ENCODE measurements at regions of chr2 and their contacts with region 1.

Region 1: DNA sequence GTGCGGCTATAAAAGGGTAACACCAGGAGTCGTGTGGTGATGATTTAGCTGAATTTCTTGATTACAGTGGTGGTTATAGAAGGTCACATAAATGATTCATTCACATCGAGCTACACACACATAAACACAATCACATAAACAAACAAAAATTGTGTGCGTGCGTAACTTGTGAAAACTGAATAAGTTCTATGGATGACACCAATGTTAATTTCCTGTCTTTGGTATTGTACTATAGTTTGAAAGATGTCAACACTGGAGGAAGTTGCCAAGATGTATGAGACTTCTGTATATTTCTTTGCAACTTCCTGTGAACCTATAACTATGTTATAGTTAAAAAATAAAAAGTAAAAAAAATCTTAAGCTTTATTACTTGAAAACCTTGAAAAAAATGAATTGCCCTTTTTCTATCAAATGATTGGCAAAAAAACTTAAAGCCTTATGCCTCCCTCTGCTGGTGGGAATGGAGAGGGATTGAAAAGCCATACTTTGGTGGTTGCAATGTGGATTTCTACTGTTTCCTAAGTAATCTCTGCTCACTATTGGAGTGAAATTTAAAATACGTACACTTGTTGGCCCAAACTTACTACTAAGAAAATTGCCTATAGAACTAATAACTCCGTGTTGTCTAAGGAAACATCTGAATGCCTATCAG is 227.7 kb downstream of the RPIA start:
- DNase-seq: peak; percentile 29
- H3K4me3 ChIP-seq: no peak overlapping the region
- H3K27ac ChIP-seq: no peak overlapping the region
- H3K4me1 ChIP-seq: no peaks in the 10 kb centered on the region
- H3K27me3 ChIP-seq: peaks cover 34% of the 10 kb centered on the region
- CTCF ChIP-seq: peak; percentile 69

Region 2: DNA sequence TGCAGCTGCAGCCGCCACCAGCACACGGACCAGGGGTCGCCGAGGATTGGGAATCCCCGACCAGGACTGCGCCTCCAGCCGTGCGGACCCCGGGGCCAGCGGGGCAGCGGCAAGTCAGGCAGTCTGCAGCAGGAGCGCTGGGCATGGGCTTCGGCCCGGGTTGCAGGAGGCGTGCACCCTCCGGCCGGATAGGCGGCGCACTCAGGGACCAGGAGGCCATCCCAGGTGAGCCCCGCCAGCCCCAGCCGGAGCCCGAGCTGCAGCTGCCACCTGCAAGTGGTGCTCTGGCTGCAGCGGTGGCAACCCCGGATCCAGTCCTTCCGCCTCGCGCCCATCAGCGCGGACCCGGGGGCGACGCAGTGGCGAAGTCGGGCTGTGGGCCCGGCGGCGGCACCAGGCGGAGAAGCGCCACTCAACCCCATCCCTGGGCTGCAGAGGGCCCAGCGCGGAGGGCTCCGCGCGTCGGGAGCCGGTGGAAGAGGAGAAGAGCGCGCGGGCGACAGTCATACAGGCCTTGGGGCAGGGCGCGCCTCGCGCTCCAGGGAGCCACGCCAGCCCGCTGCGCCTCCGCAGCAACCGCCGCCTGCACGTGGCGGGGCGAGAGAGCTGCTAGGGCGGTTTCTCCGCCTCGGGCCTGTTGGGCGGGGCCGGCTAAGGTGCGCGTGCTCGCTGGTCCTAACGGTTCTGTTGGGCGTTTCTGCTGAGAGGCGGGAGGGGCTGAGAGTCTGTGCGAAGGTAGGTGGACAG is 153.9 kb before region 1 on chr2:
- CTCF ChIA-PET with region 1: no interaction called
- POLR2A ChIA-PET with region 1: no interaction called
- intact Hi-C with region 1: no loop called
- DNase-seq: peak; percentile 67
- H3K4me3 ChIP-seq: peak overlapping the region; percentile 37
- H3K27ac ChIP-seq: no peak overlapping the region
- H3K4me1 ChIP-seq: no peaks in the 10 kb centered on the region
- H3K27me3 ChIP-seq: peaks cover 17% of the 10 kb centered on the region
- CTCF ChIP-seq: no peak

Region 3: DNA sequence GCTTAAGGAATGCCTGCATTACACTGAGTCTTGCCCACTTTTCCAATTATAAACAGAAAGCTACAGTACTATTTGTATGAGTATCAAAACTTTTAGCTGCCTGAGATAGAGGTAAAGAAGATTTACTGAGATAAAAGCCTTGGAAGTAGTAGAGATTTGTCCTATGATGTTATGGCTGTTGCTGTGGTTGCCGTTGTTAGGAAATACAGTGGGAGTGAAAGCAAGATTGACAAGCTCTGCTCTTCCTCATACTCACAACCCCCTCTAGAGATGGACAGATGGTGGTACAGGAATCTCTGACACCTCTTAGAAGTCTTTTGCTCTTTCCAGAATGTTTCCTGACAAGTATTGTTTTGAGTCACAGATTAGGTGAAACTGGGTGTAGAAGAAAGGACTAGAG is 14.8 kb after region 1 on chr2:
- CTCF ChIA-PET with region 1: no interaction called
- POLR2A ChIA-PET with region 1: no interaction called
- intact Hi-C with region 1: loop called (anchors 1 kb)
- DNase-seq: peak; percentile 22
- H3K4me3 ChIP-seq: no peak overlapping the region
- H3K27ac ChIP-seq: no peak overlapping the region
- H3K4me1 ChIP-seq: no peaks in the 10 kb centered on the region
- H3K27me3 ChIP-seq: peaks cover 14% of the 10 kb centered on the region
- CTCF ChIP-seq: no peak

Region 4: GRCh38 chr2:88999361-88999760 is 80.1 kb after region 1 on chr2:
- CTCF ChIA-PET with region 1: no interaction called
- POLR2A ChIA-PET with region 1: no interaction called
- intact Hi-C with region 1: no loop called
- DNase-seq: no peak
- H3K4me3 ChIP-seq: no peak overlapping the region
- H3K27ac ChIP-seq: no peak overlapping the region
- H3K4me1 ChIP-seq: no peaks in the 10 kb centered on the region
- H3K27me3 ChIP-seq: no peaks in the 10 kb centered on the region
- CTCF ChIP-seq: no peak

Measured in A673 (cell line).